ENCODE measurements at regions of chr6 and their contacts with region 1.

Region 1: DNA sequence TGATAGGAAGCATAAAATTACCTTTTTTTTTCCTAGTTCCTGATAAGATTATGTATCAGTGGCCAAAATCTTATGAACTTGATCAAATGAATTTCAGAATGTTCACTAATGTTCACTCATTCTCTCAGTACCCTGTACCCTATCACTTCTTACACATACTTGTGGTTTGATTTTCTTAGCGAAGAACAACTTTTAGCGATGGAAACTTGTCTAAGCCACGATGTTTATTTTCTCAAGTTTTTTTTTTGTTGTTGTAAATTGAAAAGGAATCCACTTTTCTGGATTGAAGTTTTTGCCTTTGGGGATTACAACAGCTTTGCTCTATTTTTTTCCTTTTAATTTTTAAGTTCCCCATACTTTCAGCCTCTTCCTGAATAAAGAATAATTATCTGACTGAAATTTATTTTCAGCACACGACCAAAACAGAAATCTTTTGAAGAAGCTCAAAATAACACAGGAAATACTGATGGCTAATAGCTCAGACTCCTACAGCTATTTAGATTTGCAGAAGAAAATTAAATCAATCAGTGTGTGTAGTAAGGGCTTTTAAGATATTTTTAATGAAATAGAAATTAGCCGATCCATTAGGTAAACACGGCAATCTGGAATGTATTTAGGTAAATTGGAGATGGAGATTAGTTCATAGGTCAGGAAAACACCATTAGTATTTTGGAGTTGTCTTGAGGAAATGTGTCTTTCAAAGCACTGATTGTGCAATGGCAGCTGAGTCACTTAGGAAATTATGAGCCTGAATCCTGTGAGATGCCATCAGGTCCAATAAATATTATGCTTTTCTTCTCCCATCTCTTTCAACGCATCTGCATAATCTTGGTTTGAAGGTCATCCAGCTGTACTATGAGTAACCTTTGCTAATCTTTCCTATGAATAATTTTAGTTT is 217.5 kb downstream of the GJA1 start:
- DNase-seq: no peak

Region 2: DNA sequence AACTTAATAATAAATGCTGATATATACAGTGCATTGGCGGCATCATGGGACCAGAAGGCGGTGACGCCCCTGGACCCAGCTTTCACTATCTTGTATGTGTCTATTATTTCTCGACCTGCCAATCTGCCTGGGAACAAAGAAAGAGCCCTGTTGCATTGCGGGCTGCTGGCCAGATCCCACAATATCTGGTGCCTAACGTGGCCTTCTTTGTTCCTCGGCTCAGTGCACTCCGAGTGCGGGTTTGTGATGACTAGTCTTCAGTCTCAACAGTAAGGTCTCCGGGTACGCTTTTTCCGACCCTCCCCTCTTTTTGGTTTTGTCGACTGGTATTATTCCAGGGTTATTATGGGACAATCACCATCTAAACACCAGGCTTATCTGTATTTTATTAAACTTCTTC is 610.2 kb before region 1 on chr6:
- intact Hi-C with region 1: no loop called
- DNase-seq: no peak

Region 3: DNA sequence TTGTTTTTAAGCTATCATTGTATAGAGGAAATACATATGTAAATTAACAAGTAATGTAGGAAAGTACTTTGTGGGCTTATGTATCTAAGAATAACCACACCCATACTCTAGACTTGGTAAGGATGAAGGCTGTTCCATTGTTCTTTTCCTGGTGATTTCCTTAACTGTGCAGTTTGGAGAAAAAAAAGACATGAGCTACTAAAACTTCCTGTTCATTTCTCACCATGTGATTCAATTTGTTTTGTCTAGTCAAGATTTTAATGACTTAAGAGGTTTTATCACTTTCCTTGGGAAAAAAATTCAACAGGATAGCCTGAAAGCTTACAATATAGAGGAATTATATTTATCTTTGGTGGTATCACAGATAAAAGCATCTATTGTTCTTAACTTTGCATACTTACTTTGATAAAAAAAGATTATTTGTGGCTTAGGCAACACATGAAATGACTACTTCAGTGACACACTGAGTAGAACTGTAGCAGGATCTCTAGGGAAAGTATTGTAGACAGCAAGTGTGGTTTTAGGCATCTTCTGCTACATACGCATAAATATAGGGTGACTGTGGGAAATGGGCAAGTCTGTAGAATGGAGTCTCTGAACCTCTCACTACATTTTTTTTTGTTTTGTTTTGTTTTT is 137.2 kb before region 1 on chr6:
- intact Hi-C with region 1: loop called (anchors 5 kb)
- DNase-seq: no peak

Region 4: GRCh38 chr6:121573481-121573880 is 79.5 kb before region 1 on chr6:
- intact Hi-C with region 1: no loop called
- DNase-seq: no peak

Region 5: GRCh38 chr6:121711472-121711871 is 58.5 kb after region 1 on chr6:
- intact Hi-C with region 1: loop called (anchors 10 kb)
- DNase-seq: no peak

Region 6: DNA sequence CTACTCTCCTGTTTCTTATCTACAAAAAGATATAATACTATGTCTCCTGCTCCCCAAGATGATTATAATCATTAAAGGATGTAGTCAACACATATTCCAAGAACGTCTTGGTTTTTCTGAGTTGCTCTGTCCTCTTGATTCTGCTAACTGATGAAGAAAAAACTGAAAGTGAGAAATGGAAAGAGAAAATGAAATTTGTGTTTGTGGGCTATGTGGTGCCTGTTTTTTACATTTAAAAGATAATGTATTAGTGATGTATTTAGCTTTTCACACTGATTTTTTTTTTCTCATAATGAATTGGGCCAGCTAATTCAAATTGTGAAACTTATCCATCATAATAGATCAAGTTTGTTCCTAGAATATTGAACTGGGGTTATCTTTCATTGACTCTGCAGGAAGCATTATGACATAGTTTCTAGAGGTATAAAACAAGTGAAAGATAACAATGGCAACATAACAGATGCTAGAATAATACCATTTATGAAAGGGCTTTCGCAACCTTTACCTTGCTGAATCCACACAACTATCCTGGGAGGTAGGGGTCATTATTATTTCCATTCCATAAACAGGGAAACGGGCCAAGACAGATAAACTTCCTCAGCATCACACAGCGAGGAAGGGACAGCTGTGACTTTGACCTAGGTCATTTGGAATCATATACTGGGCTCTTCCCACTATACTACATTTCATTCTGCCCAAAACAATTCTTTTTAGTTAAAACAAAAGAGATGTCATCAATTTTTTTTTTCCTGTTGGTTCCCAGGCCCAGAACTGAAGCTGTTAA is 119.2 kb after region 1 on chr6:
- intact Hi-C with region 1: loop called (anchors 5 kb)
- DNase-seq: no peak